Transverse colon (tissue), 4 donors: ENCODE measurements at regions of chr22 and their contacts with region 1.

Region 1: GRCh38 chr22:35140879-35141745 is 75.2 kb downstream of the ISX start:
- DNase-seq: peak; percentile 79
- H3K4me3 ChIP-seq: no peak overlapping the region
- H3K27ac ChIP-seq: no peak overlapping the region
- H3K4me1 ChIP-seq: peaks cover 0 to 5% (median 0%) of the 10 kb centered on the region in 4 donors
- H3K27me3 ChIP-seq: no peaks in the 10 kb centered on the region
- CTCF ChIP-seq: peak; percentile 26 to 68 (median 51)
- EP300 ChIP-seq: no peak
- POLR2A ChIP-seq: no peak

Region 2: GRCh38 chr22:35023692-35024363 is 117.3 kb before region 1 on chr22:
- in situ Hi-C with region 1: no loop called
- intact Hi-C with region 1: no loop called
- DNase-seq: peak; percentile 78
- H3K4me3 ChIP-seq: no peak overlapping the region
- H3K27ac ChIP-seq: no peak overlapping the region
- H3K4me1 ChIP-seq: peaks cover 2 to 17% (median 9%) of the 10 kb centered on the region in 4 donors
- H3K27me3 ChIP-seq: peaks cover 14% of the 10 kb centered on the region
- CTCF ChIP-seq: peak; percentile 75 to 88 (median 84)
- EP300 ChIP-seq: no peak
- POLR2A ChIP-seq: no peak

Region 3: DNA sequence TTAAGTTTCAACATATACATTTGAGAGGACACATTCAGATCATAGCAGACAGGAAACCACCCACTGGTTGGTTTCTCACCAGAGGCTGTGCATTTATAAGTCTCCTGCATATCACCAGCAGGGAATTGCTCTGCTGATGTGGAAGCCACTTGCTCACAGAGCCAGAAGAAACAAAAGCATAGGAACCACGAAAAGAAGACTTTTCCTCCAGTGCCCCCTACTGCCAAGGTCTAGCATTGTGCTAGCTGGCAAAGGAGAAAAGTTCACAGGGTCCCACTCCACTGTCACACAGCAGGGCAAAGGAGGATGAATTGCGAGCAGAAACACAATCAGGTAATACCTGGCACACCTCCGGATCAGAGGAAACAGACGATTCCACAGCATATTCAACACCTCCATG is 104.0 kb before region 1 on chr22:
- in situ Hi-C with region 1: loop called in 1 of 4 experiments (anchors 10 kb)
- intact Hi-C with region 1: no loop called
- DNase-seq: no peak
- H3K4me3 ChIP-seq: no peak overlapping the region
- H3K27ac ChIP-seq: no peak overlapping the region
- H3K4me1 ChIP-seq: no peaks in the 10 kb centered on the region
- H3K27me3 ChIP-seq: no peaks in the 10 kb centered on the region
- CTCF ChIP-seq: no peak
- EP300 ChIP-seq: no peak
- POLR2A ChIP-seq: no peak